Activated naive CD4-positive, alpha-beta T cell treated with anti-CD3 and anti-CD28 coated beads for 36 hours (primary cell): ENCODE measurements at regions of chr10 and their contacts with region 1.

Region 1: GRCh38 chr10:23525406-23525805 is 86.5 kb downstream of the OTUD1 start:
- DNase-seq: peak; percentile 29
- H3K4me3 Mint-ChIP-seq: no peak overlapping the region
- H3K27ac Mint-ChIP-seq: no peak overlapping the region
- H3K4me1 Mint-ChIP-seq: peaks cover 13% of the 10 kb centered on the region
- H3K27me3 Mint-ChIP-seq: no peaks in the 10 kb centered on the region

Region 2: GRCh38 chr10:23314835-23315239 is 210.6 kb before region 1 on chr10:
- CTCF ChIA-PET with region 1: interaction called, 106 read pairs
- intact Hi-C with region 1: loop called (anchors 1 kb)
- DNase-seq: peak; percentile 71
- H3K4me3 Mint-ChIP-seq: no peak overlapping the region
- H3K27ac Mint-ChIP-seq: no peak overlapping the region
- H3K4me1 Mint-ChIP-seq: peaks cover 4% of the 10 kb centered on the region
- H3K27me3 Mint-ChIP-seq: no peaks in the 10 kb centered on the region

Region 3: GRCh38 chr10:23325132-23325531 is 200.3 kb before region 1 on chr10:
- CTCF ChIA-PET with region 1: interaction called, 20 read pairs
- intact Hi-C with region 1: loop called (anchors 1 kb)
- DNase-seq: no peak
- H3K4me3 Mint-ChIP-seq: no peak overlapping the region
- H3K27ac Mint-ChIP-seq: no peak overlapping the region
- H3K4me1 Mint-ChIP-seq: peaks cover 30% of the 10 kb centered on the region
- H3K27me3 Mint-ChIP-seq: no peaks in the 10 kb centered on the region

Region 4: DNA sequence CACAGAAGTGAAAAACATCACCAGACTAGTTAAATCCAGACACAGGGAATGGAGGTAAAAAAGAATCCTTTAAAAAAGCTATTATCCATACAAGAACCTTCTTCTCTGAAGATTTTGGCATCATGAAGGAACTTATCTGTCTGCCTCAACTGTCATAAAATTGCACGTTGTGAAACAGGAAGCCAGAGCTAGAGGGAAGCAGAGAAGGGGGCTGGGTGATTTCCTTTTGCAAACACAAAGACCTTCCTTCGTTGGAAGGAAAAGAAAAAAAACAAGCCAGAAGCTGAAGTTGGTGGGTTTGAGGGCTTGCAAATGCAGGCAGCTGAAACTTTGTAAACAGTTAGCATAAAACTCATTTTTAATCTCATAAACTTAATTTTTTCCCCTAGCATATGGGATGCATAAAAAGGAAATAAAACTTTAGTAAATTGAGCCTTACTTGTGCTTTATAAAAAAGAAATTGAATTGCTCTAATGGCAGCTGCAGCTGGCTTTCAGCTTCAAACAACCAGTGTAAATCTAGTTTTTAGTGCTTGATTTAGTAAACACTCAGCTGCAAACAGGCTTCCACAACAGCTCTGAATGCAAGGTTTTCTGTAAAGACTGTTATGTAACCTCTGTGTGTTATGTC is 15.1 kb after region 1 on chr10:
- CTCF ChIA-PET with region 1: interaction called, 15 read pairs
- intact Hi-C with region 1: no loop called
- DNase-seq: no peak
- H3K4me3 Mint-ChIP-seq: no peak overlapping the region
- H3K27ac Mint-ChIP-seq: peak overlapping the region; percentile 65
- H3K4me1 Mint-ChIP-seq: peaks cover 64% of the 10 kb centered on the region
- H3K27me3 Mint-ChIP-seq: no peaks in the 10 kb centered on the region

Region 5: DNA sequence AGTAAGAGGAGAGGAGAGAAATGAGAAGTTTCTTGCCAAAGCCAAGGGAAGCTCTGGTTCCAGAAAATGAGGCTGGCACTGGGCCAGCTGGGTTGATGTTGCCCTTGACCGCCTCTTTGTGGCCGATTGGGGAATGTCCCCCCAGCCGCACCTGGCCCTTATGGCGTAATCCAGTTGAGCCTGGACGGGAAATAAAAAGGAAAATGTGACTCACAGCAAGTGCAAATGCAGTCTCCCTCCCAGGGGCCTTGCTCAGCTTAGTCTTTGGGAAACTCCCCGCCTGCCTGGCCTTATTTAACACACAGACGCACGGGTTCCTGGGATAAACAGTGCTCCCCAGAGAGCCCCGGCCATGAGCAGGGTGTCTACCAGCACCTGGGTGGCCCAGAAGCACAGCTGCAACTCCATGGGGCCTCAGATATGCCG is 858.3 kb after region 1 on chr10:
- CTCF ChIA-PET with region 1: no interaction called
- intact Hi-C with region 1: loop called (anchors 10 kb)
- DNase-seq: peak; percentile 71
- H3K4me3 Mint-ChIP-seq: peak overlapping the region; percentile 21
- H3K27ac Mint-ChIP-seq: peak overlapping the region; percentile 86
- H3K4me1 Mint-ChIP-seq: peaks cover 12% of the 10 kb centered on the region
- H3K27me3 Mint-ChIP-seq: peaks cover 21% of the 10 kb centered on the region